AG04450 (cell line): ENCODE measurements at regions of chr20 and their contacts with region 1.

Region 1: GRCh38 chr20:62368976-62369814 is 2.1 kb upstream of the LAMA5 start:
- DNase-seq: no peak
- H3K4me3 ChIP-seq: peak overlapping the region; percentile 39
- H3K27ac ChIP-seq: peak overlapping the region; percentile 21
- H3K27me3 ChIP-seq: no peaks in the 10 kb centered on the region
- CTCF ChIP-seq: peak; percentile 37

Region 2: DNA sequence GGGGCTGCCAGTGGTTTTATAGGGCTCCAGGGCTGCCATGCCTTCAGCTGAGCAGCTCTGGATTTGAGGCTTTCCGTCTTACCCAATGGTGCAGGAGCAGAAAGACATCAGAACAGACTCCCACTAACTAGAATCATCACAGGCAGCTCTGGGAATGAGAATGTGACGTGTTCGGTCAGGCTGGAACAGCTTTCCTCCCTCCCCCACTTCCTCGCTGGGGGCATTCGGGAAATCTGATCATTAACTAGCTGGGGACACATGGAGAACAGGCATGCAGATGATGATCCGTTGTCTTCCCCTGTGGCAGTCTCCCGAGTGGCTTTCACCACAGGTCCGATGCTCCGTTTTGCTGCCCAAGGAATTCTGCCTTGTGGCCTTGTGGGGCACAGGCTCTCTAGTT is 191.9 kb before region 1 on chr20:
- CTCF ChIA-PET with region 1: no interaction called
- POLR2A ChIA-PET with region 1: no interaction called
- DNase-seq: no peak
- H3K4me3 ChIP-seq: no peak overlapping the region
- H3K27ac ChIP-seq: no peak overlapping the region
- H3K27me3 ChIP-seq: no peaks in the 10 kb centered on the region
- CTCF ChIP-seq: no peak

Region 3: DNA sequence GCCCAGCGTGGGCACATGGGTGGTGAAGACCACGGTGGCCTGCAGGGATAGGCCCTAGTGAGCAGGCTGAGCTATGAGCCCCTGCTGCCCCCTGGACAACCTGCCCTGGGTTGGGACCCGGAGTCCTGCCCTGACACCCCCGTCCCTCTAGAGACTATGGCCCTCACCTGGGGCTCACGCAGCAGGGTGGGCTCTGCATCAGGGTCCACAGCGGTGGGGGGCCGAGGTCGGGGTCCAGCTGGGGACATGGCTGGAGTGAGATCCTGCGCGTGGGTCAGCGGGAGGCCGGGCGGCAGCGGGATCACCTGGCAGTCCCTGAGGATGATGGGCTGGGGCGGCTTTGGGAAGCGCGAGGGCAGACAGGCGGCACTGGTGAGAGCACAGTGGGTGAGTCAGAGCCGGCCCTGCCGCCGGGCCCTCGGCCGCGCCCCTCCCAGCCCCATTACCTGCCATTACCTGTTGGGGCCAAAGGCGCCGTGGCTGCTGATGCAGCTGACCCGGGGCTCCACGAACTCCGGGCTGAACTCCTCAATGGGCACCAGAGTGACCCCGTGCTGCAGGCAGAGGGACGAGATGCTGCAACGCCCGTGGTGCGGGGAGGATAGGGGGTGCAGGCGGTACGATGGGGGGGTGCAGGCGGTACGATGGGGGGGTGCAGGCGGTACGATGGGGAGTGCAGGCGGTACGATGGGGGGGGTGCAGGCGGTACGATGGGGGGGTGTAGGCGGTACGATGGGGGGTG is 38.4 kb before region 1 on chr20:
- CTCF ChIA-PET with region 1: no interaction called
- POLR2A ChIA-PET with region 1: no interaction called
- DNase-seq: no peak
- H3K4me3 ChIP-seq: no peak overlapping the region
- H3K27ac ChIP-seq: no peak overlapping the region
- H3K27me3 ChIP-seq: no peaks in the 10 kb centered on the region
- CTCF ChIP-seq: no peak

Region 4: GRCh38 chr20:62386383-62387218 is 17.4 kb after region 1 on chr20 and contains the start of gene RPS21:
- CTCF ChIA-PET with region 1: interaction called, 16 read pairs
- POLR2A ChIA-PET with region 1: interaction called, 4 read pairs
- DNase-seq: peak; percentile 61
- H3K4me3 ChIP-seq: peak within 1 kb of the TSS; percentile 99
- H3K27ac ChIP-seq: peak within 1 kb of the TSS; percentile 61
- H3K27me3 ChIP-seq: no peaks in the 10 kb centered on the region
- CTCF ChIP-seq: no peak
- polyA plus RNA-seq, gene RPS21: 2,351 and 2,723 TPM in 2 replicates